ENCODE measurements at regions of chr11 and their contacts with region 1.

Region 1: DNA sequence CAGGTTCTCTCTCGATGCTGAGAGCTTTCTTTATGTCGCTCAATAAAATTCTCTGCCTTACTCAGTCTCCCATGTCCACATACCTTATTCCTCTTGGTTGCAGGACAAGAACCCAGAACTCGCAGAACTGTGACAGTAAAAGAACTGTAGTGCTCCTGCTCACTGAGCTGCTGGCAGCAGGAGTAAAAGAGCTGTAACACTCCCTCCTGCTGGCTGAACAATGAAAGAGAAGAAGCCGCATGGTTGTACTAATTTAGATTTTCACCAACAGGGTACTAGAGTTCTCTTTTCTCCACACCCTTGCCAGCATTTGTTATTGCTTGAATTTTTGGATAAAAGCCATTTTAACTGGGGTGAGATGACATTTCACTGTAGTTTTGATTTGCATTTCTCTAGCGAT is 433.2 kb downstream of the GUCY1A2 start:
- DNase-seq: peak; percentile 70
- H3K4me3 ChIP-seq: no peak overlapping the region
- H3K27ac ChIP-seq: no peak overlapping the region
- H3K4me1 ChIP-seq: no peaks in the 10 kb centered on the region
- H3K27me3 ChIP-seq: no peaks in the 10 kb centered on the region

Region 2: GRCh38 chr11:106156290-106156937 is 428.6 kb before region 1 on chr11:
- in situ Hi-C with region 1: loop called (anchors 25 kb)
- DNase-seq: peak; percentile 82
- H3K4me3 ChIP-seq: no peak overlapping the region
- H3K27ac ChIP-seq: no peak overlapping the region
- H3K4me1 ChIP-seq: peaks cover 22% of the 10 kb centered on the region
- H3K27me3 ChIP-seq: no peaks in the 10 kb centered on the region

Region 3: DNA sequence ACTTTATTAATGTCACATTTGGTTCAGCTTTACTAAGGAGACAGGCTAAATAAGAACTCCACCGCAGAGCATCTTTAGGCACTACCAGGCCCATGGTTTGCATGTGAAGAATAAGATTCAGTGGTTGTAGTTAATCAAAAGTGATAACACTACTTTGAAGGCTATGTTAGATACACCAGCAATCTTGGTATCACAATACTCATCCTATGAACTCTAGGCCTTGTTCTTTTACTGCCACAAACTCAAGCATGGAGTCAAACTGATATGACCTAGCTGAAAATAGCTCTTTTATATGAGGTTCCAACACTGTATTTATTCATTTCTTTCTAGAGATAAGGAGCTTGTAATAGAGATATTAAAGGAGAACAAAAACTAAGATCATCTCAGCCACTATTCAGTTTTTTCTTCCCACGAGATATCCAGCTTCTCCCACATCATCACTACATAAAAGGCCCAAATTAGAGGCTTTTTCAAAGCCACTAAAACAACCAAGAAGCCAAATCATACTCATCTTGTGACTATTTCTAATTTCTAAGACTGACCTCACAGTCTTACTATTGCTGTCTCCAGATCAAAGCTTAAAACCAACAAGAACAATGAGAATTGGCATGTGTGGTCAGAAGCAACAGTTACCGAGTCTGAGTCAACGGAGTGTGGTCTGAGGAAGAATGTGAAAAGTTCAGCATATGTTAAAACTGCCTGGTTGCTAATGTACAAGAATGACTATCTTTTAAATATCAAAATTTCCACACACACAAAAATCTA is 458.4 kb after region 1 on chr11:
- in situ Hi-C with region 1: loop called (anchors 25 kb)
- DNase-seq: peak; percentile 96
- H3K4me3 ChIP-seq: no peak overlapping the region
- H3K27ac ChIP-seq: peak overlapping the region; percentile 66
- H3K4me1 ChIP-seq: peaks cover 16% of the 10 kb centered on the region
- H3K27me3 ChIP-seq: peaks cover 41% of the 10 kb centered on the region